Left lung (tissue), 14 donors: ENCODE measurements at regions of chr3 and their contacts with region 1.

Region 1: GRCh38 chr3:53072653-53073552 is 27.0 kb upstream of the SFMBT1 start:
- DNase-seq: peak; percentile 65 to 96 (median 84)
- ATAC-seq: peak; percentile 98
- H3K4me3 ChIP-seq: peak overlapping the region; percentile 60 to 83
- H3K27ac ChIP-seq: peak overlapping the region; percentile 7 to 55
- H3K4me1 ChIP-seq: peaks cover 0 to 9% of the 10 kb centered on the region in 2 donors
- H3K27me3 ChIP-seq: no peaks in the 10 kb centered on the region
- CTCF ChIP-seq: peak; percentile 79 to 95

Region 2: DNA sequence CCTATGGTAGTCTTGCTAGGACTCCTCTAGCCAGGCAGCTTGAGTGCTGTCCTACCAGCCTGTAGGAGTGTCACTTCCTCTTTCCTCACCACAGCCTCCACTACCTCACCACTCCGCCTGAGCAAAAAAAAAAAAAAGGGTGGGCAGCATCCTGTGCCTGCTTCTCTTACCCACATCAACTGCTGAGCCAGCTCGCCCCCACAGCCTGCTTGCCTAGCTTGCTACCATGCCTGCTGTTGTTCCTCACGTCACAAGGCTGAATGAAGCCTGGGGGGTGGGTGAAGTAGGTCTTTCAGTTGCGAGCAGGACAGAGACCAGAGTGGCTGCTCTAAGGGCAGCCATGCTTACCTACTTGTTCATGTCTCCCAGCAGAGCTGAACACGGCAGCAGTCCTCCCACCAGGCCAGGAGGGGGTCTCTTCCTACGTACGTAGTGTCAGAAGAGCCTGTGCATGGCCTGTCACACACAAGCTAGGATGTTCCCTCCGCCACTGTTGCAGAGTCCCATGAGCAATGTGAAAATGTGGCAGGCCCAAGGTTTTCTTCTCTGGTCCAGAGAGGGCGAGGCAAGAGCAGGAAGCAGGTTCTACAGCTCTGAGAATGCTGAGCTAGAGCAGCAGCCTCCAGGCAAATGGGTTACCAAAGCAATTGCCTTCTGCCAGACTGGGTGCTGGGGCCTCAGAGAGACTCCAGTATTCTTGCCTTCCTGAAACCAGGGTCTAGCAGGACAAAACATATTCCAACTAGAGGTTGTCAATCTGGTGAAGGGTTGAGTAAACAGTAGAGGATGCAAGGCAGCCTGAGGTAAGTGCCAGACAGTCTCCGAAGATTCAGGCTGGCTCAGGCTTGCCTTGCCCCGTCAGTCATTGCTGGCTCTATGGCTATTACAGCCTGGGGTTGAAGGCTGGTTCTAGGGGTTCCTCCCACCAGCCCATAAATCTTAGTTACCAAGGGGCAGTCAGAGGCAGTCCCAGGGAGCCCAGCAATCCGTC is 819.3 kb before region 1 on chr3:
- intact Hi-C with region 1: no loop called
- DNase-seq: peak in 1 of 4 donors; percentile 71
- ATAC-seq: peak; percentile 80
- H3K4me3 ChIP-seq: no peak overlapping the region
- H3K27ac ChIP-seq: peak overlapping the region in 1 of 2 donors; percentile 83
- H3K4me1 ChIP-seq: peaks cover 0 to 38% of the 10 kb centered on the region in 2 donors
- H3K27me3 ChIP-seq: no peaks in the 10 kb centered on the region
- CTCF ChIP-seq: no peak

Region 3: GRCh38 chr3:52742418-52743041 is 330.4 kb before region 1 on chr3:
- intact Hi-C with region 1: loop called in 1 of 2 experiments (anchors 10 kb)
- DNase-seq: peak in 2 of 4 donors; percentile 9 to 23
- ATAC-seq: peak; percentile 67
- H3K4me3 ChIP-seq: no peak overlapping the region
- H3K27ac ChIP-seq: no peak overlapping the region
- H3K4me1 ChIP-seq: no peaks in the 10 kb centered on the region
- H3K27me3 ChIP-seq: no peaks in the 10 kb centered on the region
- CTCF ChIP-seq: peak; percentile 28 to 35

Region 4: DNA sequence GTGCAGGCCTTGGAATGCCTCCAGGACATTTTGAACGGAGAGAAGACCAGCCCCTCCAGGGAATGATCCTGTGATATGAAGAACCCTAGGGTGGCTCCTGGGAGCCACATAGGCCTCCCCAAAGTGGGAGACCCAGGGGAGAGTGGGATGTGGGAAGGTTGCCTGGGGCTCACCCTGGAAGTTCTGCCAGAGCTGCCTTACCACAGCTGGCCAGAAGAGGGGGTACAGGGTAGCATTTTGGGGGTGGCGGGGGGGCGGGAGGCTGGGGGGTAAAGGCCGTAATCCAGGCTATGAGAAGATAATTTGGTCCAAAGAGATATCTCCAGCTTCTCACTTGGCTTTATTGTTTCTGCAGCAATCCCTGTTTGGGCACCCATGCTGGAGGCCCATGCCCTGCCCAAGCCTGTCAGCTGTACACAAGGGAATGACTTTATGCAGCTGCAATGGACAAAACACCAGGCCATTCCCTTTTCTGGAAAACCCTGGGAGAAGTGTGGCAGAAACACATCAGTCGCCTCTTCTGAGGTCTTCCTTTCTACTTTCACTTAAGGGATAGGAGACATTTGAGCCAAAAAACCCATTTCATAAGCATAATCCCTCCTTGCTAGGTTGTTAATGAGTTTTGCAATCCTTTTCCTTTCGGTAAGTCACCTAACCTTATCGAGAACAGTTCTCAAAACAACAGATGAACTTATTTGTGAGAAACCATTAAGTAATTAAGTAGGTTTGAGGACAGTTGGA is 227.0 kb before region 1 on chr3:
- intact Hi-C with region 1: loop called in 1 of 2 experiments (anchors 10 kb)
- DNase-seq: no peak
- ATAC-seq: peak; percentile 49
- H3K4me3 ChIP-seq: no peak overlapping the region
- H3K27ac ChIP-seq: peak overlapping the region; percentile 61
- H3K4me1 ChIP-seq: peaks cover 10 to 37% of the 10 kb centered on the region in 2 donors
- H3K27me3 ChIP-seq: no peaks in the 10 kb centered on the region
- CTCF ChIP-seq: peak in 1 of 2 donors; percentile 33

Region 5: DNA sequence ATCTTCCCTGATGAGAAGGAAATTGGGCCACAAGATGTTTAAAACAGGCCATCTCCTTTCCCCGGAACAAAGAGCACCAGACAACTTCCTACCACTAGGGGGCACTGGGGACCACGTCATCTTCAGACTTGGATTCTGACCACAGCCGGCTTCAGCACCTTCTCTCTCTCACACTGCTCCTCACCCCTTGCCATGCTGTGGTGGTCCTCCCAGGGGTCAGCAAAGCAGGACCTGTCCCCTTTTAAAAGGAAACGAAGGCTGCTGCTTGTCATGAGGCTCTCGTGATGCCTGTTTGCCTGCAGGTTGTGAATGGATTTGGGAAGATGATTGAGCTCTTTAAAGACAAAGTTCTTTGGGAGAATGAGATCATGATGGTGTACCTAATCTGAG is 41.1 kb after region 1 on chr3:
- intact Hi-C with region 1: no loop called
- DNase-seq: peak; percentile 75 to 88 (median 78)
- ATAC-seq: peak; percentile 84
- H3K4me3 ChIP-seq: no peak overlapping the region
- H3K27ac ChIP-seq: peak overlapping the region in 1 of 2 donors; percentile 81
- H3K4me1 ChIP-seq: peaks cover 5 to 43% of the 10 kb centered on the region in 2 donors
- H3K27me3 ChIP-seq: no peaks in the 10 kb centered on the region
- CTCF ChIP-seq: peak; percentile 80 to 92

Region 6: GRCh38 chr3:53190659-53191058 is 117.8 kb after region 1 on chr3:
- intact Hi-C with region 1: no loop called
- DNase-seq: no peak
- ATAC-seq: no peak
- H3K4me3 ChIP-seq: no peak overlapping the region
- H3K27ac ChIP-seq: no peak overlapping the region
- H3K4me1 ChIP-seq: peaks cover 6 to 22% of the 10 kb centered on the region in 2 donors
- H3K27me3 ChIP-seq: no peaks in the 10 kb centered on the region
- CTCF ChIP-seq: no peak

Region 7: GRCh38 chr3:53347261-53348064 is 274.6 kb after region 1 on chr3 and contains the start of gene DCP1A:
- intact Hi-C with region 1: no loop called
- DNase-seq: peak; percentile 96 to 98 (median 98)
- ATAC-seq: peak; percentile 97
- H3K4me3 ChIP-seq: peak within 1 kb of the TSS; percentile 71 to 80
- H3K27ac ChIP-seq: peak within 1 kb of the TSS; percentile 92 to 94
- H3K4me1 ChIP-seq: peaks cover 9 to 40% of the 10 kb centered on the region in 2 donors
- H3K27me3 ChIP-seq: no peaks in the 10 kb centered on the region
- CTCF ChIP-seq: no peak
- polyA plus RNA-seq, gene DCP1A: 31.0 to 37.3 (median 34.5) TPM